Activated B cell treated with CpG ODN at 0.5 μM for 24 hours (primary cell): ENCODE measurements at regions of chr17 and their contacts with region 1.

Region 1: DNA sequence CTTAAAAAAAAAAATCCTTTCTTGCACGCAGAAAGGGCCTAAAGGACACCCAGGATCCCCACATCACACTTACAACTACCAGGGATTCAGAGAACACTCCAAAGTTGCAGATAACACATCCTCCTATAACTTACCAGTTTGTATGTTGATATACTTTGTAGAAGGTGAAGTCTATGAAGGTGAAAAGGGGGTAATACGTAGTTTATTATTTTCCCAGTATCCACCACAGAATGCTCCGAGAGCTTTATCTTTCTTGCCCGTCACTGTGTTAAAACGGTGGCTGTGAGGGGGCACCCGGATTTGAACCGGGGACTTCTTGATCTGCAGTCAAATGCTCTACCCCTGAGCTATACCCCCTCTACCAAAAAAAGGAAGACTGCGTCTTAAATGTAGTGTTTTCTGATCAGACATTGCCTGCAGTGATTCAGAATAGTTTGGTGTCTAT is 7.9 kb upstream of the RPL23 start:
- DNase-seq: no peak
- ATAC-seq: no peak
- H3K4me3 Mint-ChIP-seq: no peak overlapping the region
- H3K27ac Mint-ChIP-seq: peak overlapping the region; percentile 53
- H3K4me1 Mint-ChIP-seq: peaks cover 40% of the 10 kb centered on the region
- H3K27me3 Mint-ChIP-seq: no peaks in the 10 kb centered on the region
- CTCF ChIP-seq: no peak

Region 2: GRCh38 chr17:38879878-38880682 is 18.7 kb after region 1 on chr17:
- CTCF ChIA-PET with region 1: no interaction called
- POLR2A ChIA-PET with region 1: interaction called, 12 read pairs
- intact Hi-C with region 1: no loop called
- DNase-seq: no peak
- ATAC-seq: no peak
- H3K4me3 Mint-ChIP-seq: no peak overlapping the region
- H3K27ac Mint-ChIP-seq: peak overlapping the region; percentile 30
- H3K4me1 Mint-ChIP-seq: peaks cover 86% of the 10 kb centered on the region
- H3K27me3 Mint-ChIP-seq: no peaks in the 10 kb centered on the region
- CTCF ChIP-seq: no peak